ENCODE measurements at regions of chr1 and their contacts with region 1.

Region 1: DNA sequence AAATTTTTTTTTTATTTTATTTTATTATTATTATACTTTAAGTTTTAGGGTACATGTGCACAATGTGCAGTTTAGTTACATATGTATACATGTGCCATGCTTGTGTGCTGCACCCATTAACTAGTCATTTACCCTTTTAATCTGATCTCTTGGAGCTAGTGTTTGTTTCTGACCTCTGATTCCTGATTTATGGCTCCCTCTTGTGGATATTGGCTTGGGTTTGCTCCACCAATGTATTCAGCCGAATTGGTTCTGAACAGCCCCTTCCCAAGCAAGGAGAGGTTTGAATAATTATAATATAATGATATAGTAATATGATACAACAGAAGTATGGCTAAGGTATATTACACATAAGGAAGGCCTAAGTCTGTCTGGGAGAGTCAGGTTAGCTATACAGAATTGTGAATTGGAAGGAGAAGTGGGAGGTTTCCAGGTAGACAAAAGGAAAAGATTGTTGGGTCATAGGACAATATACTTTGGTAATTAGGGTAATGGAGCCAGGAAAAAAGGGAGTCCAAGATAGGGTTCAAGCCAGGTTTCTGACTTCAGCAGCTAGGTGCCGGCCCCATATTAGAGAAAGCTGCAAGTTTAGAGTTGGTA is 53.1 kb upstream of the HMCN1 start:
- DNase-seq: no peak
- ATAC-seq: peak; percentile 79
- H3K4me3 Mint-ChIP-seq: no peak overlapping the region
- H3K27ac Mint-ChIP-seq: no peak overlapping the region
- H3K4me1 Mint-ChIP-seq: peaks cover 14% of the 10 kb centered on the region
- H3K27me3 Mint-ChIP-seq: no peaks in the 10 kb centered on the region
- CTCF ChIP-seq: no peak; the same call in 1 of the 2 replicates

Region 2: GRCh38 chr1:185170291-185170848 is 510.8 kb before region 1 on chr1:
- CTCF ChIA-PET with region 1: interaction called, 14 read pairs
- POLR2A ChIA-PET with region 1: no interaction called
- DNase-seq: peak; percentile 48
- ATAC-seq: peak; percentile 94
- H3K4me3 Mint-ChIP-seq: peak overlapping the region; percentile 42
- H3K27ac Mint-ChIP-seq: no peak overlapping the region
- H3K4me1 Mint-ChIP-seq: no peaks in the 10 kb centered on the region
- H3K27me3 Mint-ChIP-seq: no peaks in the 10 kb centered on the region
- CTCF ChIP-seq: 0 out of 2 replicates have a peak, but pooled peaks have one; percentile 23

Region 3: GRCh38 chr1:185317034-185317885 is 363.9 kb before region 1 on chr1 and contains the start of gene IVNS1ABP:
- CTCF ChIA-PET with region 1: interaction called, 14 read pairs
- POLR2A ChIA-PET with region 1: interaction called, 4 read pairs
- DNase-seq: peak; percentile 94
- ATAC-seq: peak; percentile 92
- H3K4me3 Mint-ChIP-seq: peak within 1 kb of the TSS; percentile 93
- H3K27ac Mint-ChIP-seq: peak within 1 kb of the TSS; percentile 95
- H3K4me1 Mint-ChIP-seq: peaks cover 49% of the 10 kb centered on the region
- H3K27me3 Mint-ChIP-seq: no peaks in the 10 kb centered on the region
- CTCF ChIP-seq: no peak
- total RNA-seq, gene IVNS1ABP: 141 to 159 TPM (median 141 TPM) in 3 replicates

Region 4: DNA sequence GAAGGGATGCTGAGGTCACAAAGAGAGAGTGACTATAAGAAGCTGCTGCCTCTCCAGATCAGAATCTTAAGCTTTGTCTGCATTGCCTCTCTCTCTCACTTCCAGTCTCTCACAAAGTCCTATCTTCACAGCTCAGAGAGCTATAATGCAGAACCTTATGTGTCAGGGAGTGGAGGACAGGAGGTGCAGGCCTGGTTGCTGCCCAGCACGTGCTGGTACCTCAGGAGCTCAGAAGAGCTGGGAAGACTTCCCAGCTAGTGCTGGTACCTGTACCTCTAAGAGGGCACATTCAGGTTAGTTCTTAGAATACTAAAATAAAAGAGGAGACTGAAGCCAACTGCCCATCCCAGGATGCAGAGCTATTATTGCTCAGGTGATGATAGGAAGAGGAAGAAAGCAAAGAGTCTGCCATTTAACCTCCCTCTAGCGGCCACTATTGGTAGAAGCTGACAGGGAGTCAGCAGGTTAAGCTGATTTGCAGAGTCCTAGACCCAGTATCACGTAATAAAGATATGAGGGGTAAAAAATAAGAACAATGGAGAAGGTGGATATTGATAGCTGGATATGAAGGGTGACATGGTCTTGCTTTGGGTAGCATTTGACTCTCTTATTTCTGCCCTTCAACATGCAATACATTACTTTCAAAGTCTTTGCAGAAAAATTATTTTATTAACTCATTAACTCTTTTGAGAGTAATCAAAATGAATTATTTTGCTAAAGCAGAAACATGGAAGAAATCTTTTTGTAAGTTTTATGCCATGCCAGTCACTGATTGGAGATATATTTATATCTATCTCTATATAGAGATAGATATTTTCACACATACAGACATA is 85.1 kb before region 1 on chr1:
- CTCF ChIA-PET with region 1: interaction called, 23 read pairs
- POLR2A ChIA-PET with region 1: no interaction called
- DNase-seq: peak; percentile 71
- ATAC-seq: peak; percentile 98
- H3K4me3 Mint-ChIP-seq: no peak overlapping the region
- H3K27ac Mint-ChIP-seq: no peak overlapping the region
- H3K4me1 Mint-ChIP-seq: peaks cover 27% of the 10 kb centered on the region
- H3K27me3 Mint-ChIP-seq: no peaks in the 10 kb centered on the region; the same call in 1 of the 2 replicates
- CTCF ChIP-seq: peak; percentile 82

Region 5: GRCh38 chr1:185652348-185652747 is 28.8 kb before region 1 on chr1:
- CTCF ChIA-PET with region 1: interaction called, 24 read pairs
- POLR2A ChIA-PET with region 1: interaction called, 3 read pairs
- DNase-seq: no peak
- ATAC-seq: peak; percentile 52
- H3K4me3 Mint-ChIP-seq: no peak overlapping the region
- H3K27ac Mint-ChIP-seq: no peak overlapping the region
- H3K4me1 Mint-ChIP-seq: peaks cover 17% of the 10 kb centered on the region
- H3K27me3 Mint-ChIP-seq: peaks cover 10% of the 10 kb centered on the region
- CTCF ChIP-seq: no peak

Region 6: GRCh38 chr1:185670187-185670627 is 10.9 kb before region 1 on chr1:
- CTCF ChIA-PET with region 1: interaction called, 35 read pairs
- POLR2A ChIA-PET with region 1: no interaction called
- DNase-seq: peak; percentile 50
- ATAC-seq: peak; percentile 72
- H3K4me3 Mint-ChIP-seq: no peak overlapping the region
- H3K27ac Mint-ChIP-seq: no peak overlapping the region
- H3K4me1 Mint-ChIP-seq: peaks cover 24% of the 10 kb centered on the region
- H3K27me3 Mint-ChIP-seq: no peaks in the 10 kb centered on the region
- CTCF ChIP-seq: no peak

Region 7: GRCh38 chr1:185775501-185775900 is 94.4 kb after region 1 on chr1:
- CTCF ChIA-PET with region 1: no interaction called
- POLR2A ChIA-PET with region 1: no interaction called
- DNase-seq: no peak
- ATAC-seq: peak; percentile 72
- H3K4me3 Mint-ChIP-seq: no peak overlapping the region
- H3K27ac Mint-ChIP-seq: peak overlapping the region; percentile 18
- H3K4me1 Mint-ChIP-seq: peaks cover 26% of the 10 kb centered on the region
- H3K27me3 Mint-ChIP-seq: no peaks in the 10 kb centered on the region
- CTCF ChIP-seq: no peak

Region 8: GRCh38 chr1:185926562-185926961 is 245.4 kb after region 1 on chr1:
- CTCF ChIA-PET with region 1: no interaction called
- POLR2A ChIA-PET with region 1: no interaction called
- DNase-seq: no peak
- ATAC-seq: no peak
- H3K4me3 Mint-ChIP-seq: no peak overlapping the region
- H3K27ac Mint-ChIP-seq: no peak overlapping the region
- H3K4me1 Mint-ChIP-seq: peaks cover 27% of the 10 kb centered on the region
- H3K27me3 Mint-ChIP-seq: no peaks in the 10 kb centered on the region
- CTCF ChIP-seq: no peak